Caco-2 (cell line): ENCODE measurements at regions of chr7 and their contacts with region 1.

Region 1: GRCh38 chr7:44999245-45000095 is 531 bp upstream of the CCM2 start:
- DNase-seq: peak; percentile 100
- H3K4me3 ChIP-seq: peak overlapping the region; percentile 73
- H3K4me3 Mint-ChIP-seq: peak overlapping the region; percentile 79
- H3K27ac Mint-ChIP-seq: peak overlapping the region; percentile 95
- H3K4me1 ChIP-seq: peaks cover 15% of the 10 kb centered on the region
- H3K4me1 Mint-ChIP-seq: peaks cover 16% of the 10 kb centered on the region
- H3K27me3 ChIP-seq: no peaks in the 10 kb centered on the region
- H3K27me3 Mint-ChIP-seq: no peaks in the 10 kb centered on the region
- CTCF ChIP-seq: peak in 1 of 2 experiments; percentile 16

Region 2: GRCh38 chr7:44885394-44886317 is 113.8 kb before region 1 on chr7 and contains the start of gene PURB:
- CTCF ChIA-PET with region 1: interaction called, 13 read pairs
- POLR2A ChIA-PET with region 1: interaction called, 10 read pairs
- intact Hi-C with region 1: no loop called
- DNase-seq: peak; percentile 92 to 95
- H3K4me3 ChIP-seq: peak within 1 kb of the TSS; percentile 78
- H3K4me3 Mint-ChIP-seq: peak within 1 kb of the TSS; percentile 96
- H3K27ac Mint-ChIP-seq: peak within 1 kb of the TSS; percentile 100
- H3K4me1 ChIP-seq: peaks cover 26% of the 10 kb centered on the region
- H3K4me1 Mint-ChIP-seq: peaks cover 17% of the 10 kb centered on the region
- H3K27me3 ChIP-seq: no peaks in the 10 kb centered on the region
- H3K27me3 Mint-ChIP-seq: no peaks in the 10 kb centered on the region
- CTCF ChIP-seq: no peak
- total RNA-seq, gene PURB: 25.1 and 26.3 TPM in 2 replicates

Region 3: DNA sequence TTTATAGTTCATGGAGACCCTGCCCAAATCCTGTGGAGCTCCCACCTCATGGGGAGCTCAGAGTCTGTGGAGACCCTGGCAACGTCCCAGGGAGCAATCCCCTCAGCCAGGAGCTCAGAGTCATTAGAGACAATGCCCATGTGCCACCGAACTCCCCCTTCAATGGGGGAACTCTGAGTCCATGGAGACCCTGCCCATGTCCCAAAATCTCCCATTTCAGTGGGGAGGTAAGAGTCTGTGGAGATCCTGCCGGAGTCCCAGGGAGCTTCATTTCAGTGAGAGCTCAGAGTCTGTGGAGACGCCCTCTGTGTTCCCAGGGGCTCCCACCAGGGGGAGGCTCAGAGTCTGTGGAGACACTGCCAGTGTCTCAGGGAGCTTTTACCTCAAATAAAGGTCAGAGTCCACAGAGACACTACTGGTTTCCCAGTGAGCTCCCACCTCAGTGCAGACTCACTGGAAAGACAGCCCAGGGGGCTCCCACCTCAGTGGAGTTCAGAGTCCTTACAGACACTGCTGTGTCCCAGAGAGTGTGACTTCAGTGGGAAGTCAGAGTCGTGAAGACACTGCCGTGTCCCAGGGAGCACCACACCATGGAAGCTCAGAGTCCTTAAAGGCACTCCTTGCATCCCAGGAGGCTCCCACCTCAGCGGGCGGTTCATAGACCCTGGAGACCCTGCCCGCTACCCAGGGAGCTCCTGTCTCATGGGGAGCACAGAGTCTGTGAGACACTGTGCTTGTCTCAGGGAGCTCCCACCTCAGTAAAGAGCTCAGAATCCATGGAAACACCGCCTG is 25.7 kb before region 1 on chr7:
- CTCF ChIA-PET with region 1: interaction called, 29 read pairs
- POLR2A ChIA-PET with region 1: interaction called, 10 read pairs
- intact Hi-C with region 1: no loop called
- DNase-seq: peak; percentile 53 to 59
- H3K4me3 ChIP-seq: no peak overlapping the region
- H3K4me3 Mint-ChIP-seq: no peak overlapping the region
- H3K27ac Mint-ChIP-seq: no peak overlapping the region
- H3K4me1 ChIP-seq: peaks cover 9% of the 10 kb centered on the region; the same call in 1 of the 2 replicates
- H3K4me1 Mint-ChIP-seq: no peaks in the 10 kb centered on the region
- H3K27me3 ChIP-seq: no peaks in the 10 kb centered on the region
- H3K27me3 Mint-ChIP-seq: no peaks in the 10 kb centered on the region
- CTCF ChIP-seq: peak; percentile 44 to 63

Region 4: DNA sequence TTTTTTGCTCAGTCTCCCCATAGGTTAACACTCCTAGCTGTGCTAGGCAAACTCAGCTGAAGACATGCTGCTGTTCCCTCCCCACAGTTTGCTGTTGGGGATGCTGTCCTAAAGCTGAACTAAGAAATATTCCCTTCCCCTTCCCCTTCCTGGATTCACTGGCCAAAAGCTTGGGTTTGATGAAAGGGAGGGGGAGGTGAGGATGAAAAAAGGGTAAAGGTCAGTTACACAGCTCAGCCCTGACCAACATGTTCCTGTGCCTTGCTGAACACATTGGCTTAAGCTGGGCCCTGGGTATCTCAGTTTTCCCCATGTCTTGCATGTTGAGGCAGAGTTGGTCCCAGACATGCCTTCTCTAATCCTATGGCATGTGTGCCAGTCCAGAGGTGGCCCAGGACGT is 15.8 kb after region 1 on chr7:
- CTCF ChIA-PET with region 1: interaction called, 6 read pairs
- POLR2A ChIA-PET with region 1: no interaction called
- intact Hi-C with region 1: loop called (anchors 1 kb)
- DNase-seq: peak in 1 of 2 experiments; percentile 13
- H3K4me3 ChIP-seq: no peak overlapping the region
- H3K4me3 Mint-ChIP-seq: no peak overlapping the region
- H3K27ac Mint-ChIP-seq: peak overlapping the region; percentile 1
- H3K4me1 ChIP-seq: peaks cover 11% of the 10 kb centered on the region
- H3K4me1 Mint-ChIP-seq: peaks cover 8% of the 10 kb centered on the region
- H3K27me3 ChIP-seq: no peaks in the 10 kb centered on the region
- H3K27me3 Mint-ChIP-seq: no peaks in the 10 kb centered on the region
- CTCF ChIP-seq: peak in 1 of 2 experiments; percentile 4

Region 5: GRCh38 chr7:45052011-45052410 is 52.5 kb after region 1 on chr7:
- CTCF ChIA-PET with region 1: no interaction called
- POLR2A ChIA-PET with region 1: no interaction called
- intact Hi-C with region 1: no loop called
- DNase-seq: peak in 1 of 2 experiments; percentile 8
- H3K4me3 ChIP-seq: no peak overlapping the region
- H3K4me3 Mint-ChIP-seq: no peak overlapping the region
- H3K27ac Mint-ChIP-seq: no peak overlapping the region
- H3K4me1 ChIP-seq: no peaks in the 10 kb centered on the region
- H3K4me1 Mint-ChIP-seq: no peaks in the 10 kb centered on the region
- H3K27me3 ChIP-seq: no peaks in the 10 kb centered on the region
- H3K27me3 Mint-ChIP-seq: no peaks in the 10 kb centered on the region
- CTCF ChIP-seq: no peak

Region 6: DNA sequence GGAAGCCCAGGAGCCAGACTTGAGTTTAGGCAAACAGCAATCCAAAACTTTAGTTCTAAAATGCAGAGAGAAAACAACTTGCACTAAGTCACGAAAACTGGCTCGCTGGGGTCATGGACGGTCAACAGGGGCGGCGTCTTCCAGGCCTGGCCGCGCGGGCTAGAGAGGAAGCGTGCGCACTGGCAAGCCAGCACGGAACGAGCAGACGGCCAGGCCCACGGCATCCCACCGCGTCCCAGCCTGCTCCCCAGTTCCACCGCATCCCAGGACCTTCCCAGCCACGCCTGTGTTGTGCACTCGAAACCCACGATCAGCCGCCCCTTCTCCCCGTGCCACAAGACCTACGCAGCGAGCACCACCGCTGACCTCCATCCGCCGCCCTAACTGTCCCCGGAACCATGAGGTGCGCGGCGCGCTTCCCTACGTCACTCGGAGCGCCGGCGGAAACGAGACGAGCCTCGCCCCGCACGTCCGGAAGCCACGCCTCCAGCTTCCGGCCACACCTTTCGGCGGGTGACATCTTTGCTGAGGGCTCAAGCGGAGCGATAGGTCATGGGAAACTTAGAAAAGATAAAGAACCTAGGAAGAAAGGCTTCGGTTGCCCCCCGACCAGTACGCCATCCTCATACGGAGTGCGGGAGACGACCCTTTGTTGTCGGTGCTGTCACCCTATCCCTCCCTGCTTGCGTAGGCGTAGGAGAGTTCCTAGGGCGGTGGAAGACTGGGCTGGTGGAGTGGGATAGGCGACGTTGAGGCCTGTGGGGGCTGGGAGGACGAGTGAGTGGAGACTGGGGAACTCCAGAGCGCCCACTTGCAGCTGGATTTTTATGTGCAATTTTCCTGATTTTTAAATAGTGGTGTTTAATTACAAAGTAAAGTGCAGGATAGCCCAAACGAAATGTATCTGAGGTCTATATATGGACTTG is 112.1 kb after region 1 on chr7 and contains the start of gene TBRG4:
- CTCF ChIA-PET with region 1: interaction called, 6 read pairs
- POLR2A ChIA-PET with region 1: interaction called, 9 read pairs
- intact Hi-C with region 1: loop called (anchors 2 kb)
- DNase-seq: peak; percentile 94 to 95
- H3K4me3 ChIP-seq: peak within 1 kb of the TSS; percentile 99
- H3K4me3 Mint-ChIP-seq: peak within 1 kb of the TSS; percentile 95
- H3K27ac Mint-ChIP-seq: peak within 1 kb of the TSS; percentile 99
- H3K4me1 ChIP-seq: peaks cover 4% of the 10 kb centered on the region; the same call in 1 of the 2 replicates
- H3K4me1 Mint-ChIP-seq: peaks cover 6% of the 10 kb centered on the region
- H3K27me3 ChIP-seq: no peaks in the 10 kb centered on the region
- H3K27me3 Mint-ChIP-seq: no peaks in the 10 kb centered on the region
- CTCF ChIP-seq: peak; percentile 40 to 52
- total RNA-seq, gene TBRG4: 116 and 126 TPM in 2 replicates